PC-9 (cell line): ENCODE measurements at regions of chr3 and their contacts with region 1.

Region 1: GRCh38 chr3:187208159-187208558 is 10.9 kb downstream of the RTP1 start:
- DNase-seq: peak; percentile 73 to 86
- H3K4me3 ChIP-seq: no peak overlapping the region
- H3K27ac ChIP-seq: no peak overlapping the region
- H3K4me1 ChIP-seq: peaks cover 24% of the 10 kb centered on the region
- H3K27me3 ChIP-seq: no peaks in the 10 kb centered on the region
- CTCF ChIP-seq: no peak

Region 2: DNA sequence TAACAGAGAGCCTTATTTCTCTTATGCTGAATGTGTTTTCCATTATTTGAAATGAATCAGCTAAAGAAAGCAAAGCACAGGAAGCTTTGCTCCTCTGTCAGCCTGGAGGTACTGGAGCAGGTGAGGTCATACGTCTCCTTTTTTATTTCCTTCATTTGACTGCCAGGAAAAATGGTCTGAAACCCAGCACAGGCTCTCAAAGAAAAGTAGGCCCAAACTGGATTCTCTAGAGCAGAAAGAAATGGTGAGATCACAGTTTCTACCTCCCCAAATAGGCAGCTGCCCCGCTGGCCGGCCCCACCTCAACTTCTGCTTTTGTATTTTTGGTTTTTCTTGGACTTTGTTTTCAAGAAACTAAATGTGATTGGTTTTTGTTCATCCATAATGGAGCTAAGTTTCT is 164.0 kb before region 1 on chr3:
- CTCF ChIA-PET with region 1: no interaction called
- POLR2A ChIA-PET with region 1: interaction called, 13 read pairs
- intact Hi-C with region 1: no loop called
- DNase-seq: no peak
- H3K4me3 ChIP-seq: no peak overlapping the region
- H3K27ac ChIP-seq: no peak overlapping the region
- H3K4me1 ChIP-seq: no peaks in the 10 kb centered on the region
- H3K27me3 ChIP-seq: no peaks in the 10 kb centered on the region
- CTCF ChIP-seq: no peak

Region 3: GRCh38 chr3:187186801-187187421 is 21.2 kb before region 1 on chr3:
- CTCF ChIA-PET with region 1: no interaction called
- POLR2A ChIA-PET with region 1: interaction called, 3 read pairs
- intact Hi-C with region 1: loop called (anchors 1 kb)
- DNase-seq: peak; percentile 98 to 100
- H3K4me3 ChIP-seq: peak overlapping the region; percentile 16; the same call in 1 of the 2 replicates
- H3K27ac ChIP-seq: peak overlapping the region; percentile 83
- H3K4me1 ChIP-seq: peaks cover 60% of the 10 kb centered on the region
- H3K27me3 ChIP-seq: no peaks in the 10 kb centered on the region
- CTCF ChIP-seq: 0 out of 2 replicates have a peak, but pooled peaks have one; percentile 11

Region 4: GRCh38 chr3:187445356-187445755 is 237.2 kb after region 1 on chr3:
- CTCF ChIA-PET with region 1: no interaction called
- POLR2A ChIA-PET with region 1: interaction called, 11 read pairs
- intact Hi-C with region 1: no loop called
- DNase-seq: no peak
- H3K4me3 ChIP-seq: no peak overlapping the region
- H3K27ac ChIP-seq: no peak overlapping the region
- H3K4me1 ChIP-seq: no peaks in the 10 kb centered on the region
- H3K27me3 ChIP-seq: 0 out of 2 replicates have a peak, but pooled peaks cover 6% of the 10 kb centered on the region
- CTCF ChIP-seq: no peak